Activated CD8-positive, alpha-beta T cell treated with anti-CD3 and anti-CD28 coated beads for 36 hours (primary cell): ENCODE measurements at regions of chr2 and their contacts with region 1.

Region 1: GRCh38 chr2:112884869-112885505 is 26.0 kb upstream of the IL37 start:
- DNase-seq: peak; percentile 81
- ATAC-seq: peak; percentile 79
- H3K4me3 Mint-ChIP-seq: no peak overlapping the region
- H3K27ac Mint-ChIP-seq: no peak overlapping the region
- H3K4me1 Mint-ChIP-seq: peaks cover 23% of the 10 kb centered on the region
- H3K27me3 Mint-ChIP-seq: no peaks in the 10 kb centered on the region
- CTCF ChIP-seq: peak; percentile 95

Region 2: DNA sequence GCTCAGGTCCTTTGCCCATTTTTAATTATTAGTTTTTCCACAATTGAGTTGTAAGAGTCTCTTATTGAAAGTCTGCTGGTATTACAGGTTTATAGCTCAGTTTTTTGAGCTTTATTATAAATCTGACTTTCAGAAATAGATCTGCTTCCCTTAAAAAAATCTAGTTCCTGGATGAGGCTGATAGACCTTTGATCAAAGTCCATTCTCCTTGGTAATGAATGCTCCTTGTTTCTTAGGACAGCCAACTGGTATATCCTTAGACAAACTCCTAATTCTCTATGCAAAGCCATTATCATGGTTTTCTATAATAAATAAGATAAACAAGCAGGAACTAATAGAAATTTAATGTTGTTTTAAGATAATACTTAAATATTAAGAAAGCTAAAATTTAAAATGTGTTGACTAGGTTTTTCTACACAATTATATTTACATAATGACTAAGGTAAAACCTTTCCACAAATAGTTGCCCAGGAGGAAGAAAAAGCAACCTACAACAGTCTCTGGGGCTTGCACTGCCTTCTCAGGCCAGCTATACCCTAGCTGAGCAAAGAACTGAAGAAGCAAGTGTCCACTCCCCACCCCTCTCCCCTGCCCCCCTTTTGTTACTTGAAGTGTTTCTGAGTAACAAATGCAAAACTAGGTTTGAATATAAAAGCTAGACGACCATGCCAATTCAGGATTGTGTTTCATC is 147.3 kb before region 1 on chr2:
- CTCF ChIA-PET with region 1: interaction called, 23 read pairs
- POLR2A ChIA-PET with region 1: no interaction called
- intact Hi-C with region 1: no loop called
- DNase-seq: no peak
- ATAC-seq: no peak
- H3K4me3 Mint-ChIP-seq: no peak overlapping the region
- H3K27ac Mint-ChIP-seq: no peak overlapping the region
- H3K4me1 Mint-ChIP-seq: no peaks in the 10 kb centered on the region
- H3K27me3 Mint-ChIP-seq: no peaks in the 10 kb centered on the region
- CTCF ChIP-seq: no peak

Region 3: DNA sequence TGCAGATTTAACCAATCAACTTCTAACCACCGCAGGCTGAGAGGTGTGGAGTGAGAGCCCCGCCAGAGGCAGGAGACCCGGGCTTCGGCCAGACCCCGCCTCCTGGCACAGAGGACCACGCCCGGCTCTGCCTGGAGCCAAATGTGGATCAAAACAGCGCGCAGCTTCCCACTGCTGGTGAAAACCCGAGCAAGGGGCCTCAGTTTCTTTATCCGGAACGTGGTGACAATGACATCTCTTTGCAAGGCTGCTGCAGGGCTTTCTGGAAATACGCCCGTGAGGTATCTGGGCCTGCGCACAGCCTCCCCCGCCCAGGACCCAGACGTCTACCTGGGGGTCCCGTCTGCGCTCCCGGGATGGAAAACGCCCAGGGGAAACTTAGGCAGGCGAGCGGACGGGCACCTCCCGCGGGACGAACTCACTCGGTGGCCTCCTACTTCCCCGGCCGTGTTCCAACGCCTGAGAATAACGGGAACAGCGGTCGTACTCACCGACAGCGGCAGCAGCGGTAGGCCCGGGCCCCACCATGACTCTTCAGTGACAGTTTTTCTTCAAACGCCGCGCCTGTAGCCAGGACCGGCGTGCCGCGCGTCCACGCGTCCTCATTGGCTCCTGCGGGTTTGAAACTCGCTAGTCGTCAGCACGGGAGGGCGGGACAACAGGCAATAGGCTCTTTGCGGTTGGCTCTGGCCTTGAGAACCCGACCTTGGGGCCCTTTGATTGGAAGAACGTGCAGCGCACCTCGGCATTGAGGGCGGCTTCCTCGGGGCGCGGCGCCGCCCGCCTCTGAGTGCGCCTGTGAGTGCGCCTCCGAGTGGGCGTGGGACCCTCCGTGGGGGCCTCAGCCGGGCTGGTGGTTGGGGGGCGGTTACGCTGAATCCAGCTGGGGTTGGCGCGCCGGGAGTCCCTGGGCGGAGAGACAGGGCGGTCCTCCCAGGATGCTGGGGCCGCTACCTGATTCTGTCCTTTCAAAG is 120.6 kb before region 1 on chr2 and contains the start of gene CKAP2L:
- CTCF ChIA-PET with region 1: interaction called, 15 read pairs
- POLR2A ChIA-PET with region 1: no interaction called
- intact Hi-C with region 1: no loop called
- DNase-seq: peak; percentile 99
- ATAC-seq: peak; percentile 98
- H3K4me3 Mint-ChIP-seq: peak within 1 kb of the TSS; percentile 97
- H3K27ac Mint-ChIP-seq: peak within 1 kb of the TSS; percentile 95
- H3K4me1 Mint-ChIP-seq: peaks cover 19% of the 10 kb centered on the region
- H3K27me3 Mint-ChIP-seq: no peaks in the 10 kb centered on the region
- CTCF ChIP-seq: no peak
- total RNA-seq, gene CKAP2L: 24.5 to 30.5 TPM

Region 4: DNA sequence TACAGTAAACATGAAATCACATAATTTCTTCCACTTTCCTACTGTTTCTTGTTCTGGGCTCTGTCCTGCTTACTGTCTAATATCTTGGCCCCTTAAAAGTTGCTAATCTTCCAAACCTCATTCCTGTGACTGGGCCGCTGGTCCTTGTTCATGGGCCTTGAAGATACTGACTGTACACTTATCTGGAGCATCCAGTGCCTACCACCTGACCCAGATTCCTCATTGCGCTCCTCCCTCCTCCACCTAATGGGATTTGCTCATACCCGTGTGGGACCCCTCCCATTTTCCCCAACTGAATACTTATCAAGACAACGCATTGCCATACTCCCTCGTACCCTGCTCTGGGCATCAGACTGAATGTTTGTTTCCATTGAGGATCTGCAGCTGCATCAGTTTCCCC is 19.9 kb after region 1 on chr2:
- CTCF ChIA-PET with region 1: interaction called, 21 read pairs
- POLR2A ChIA-PET with region 1: no interaction called
- intact Hi-C with region 1: no loop called
- DNase-seq: no peak
- ATAC-seq: no peak
- H3K4me3 Mint-ChIP-seq: no peak overlapping the region
- H3K27ac Mint-ChIP-seq: no peak overlapping the region
- H3K4me1 Mint-ChIP-seq: no peaks in the 10 kb centered on the region
- H3K27me3 Mint-ChIP-seq: no peaks in the 10 kb centered on the region
- CTCF ChIP-seq: no peak

Region 5: DNA sequence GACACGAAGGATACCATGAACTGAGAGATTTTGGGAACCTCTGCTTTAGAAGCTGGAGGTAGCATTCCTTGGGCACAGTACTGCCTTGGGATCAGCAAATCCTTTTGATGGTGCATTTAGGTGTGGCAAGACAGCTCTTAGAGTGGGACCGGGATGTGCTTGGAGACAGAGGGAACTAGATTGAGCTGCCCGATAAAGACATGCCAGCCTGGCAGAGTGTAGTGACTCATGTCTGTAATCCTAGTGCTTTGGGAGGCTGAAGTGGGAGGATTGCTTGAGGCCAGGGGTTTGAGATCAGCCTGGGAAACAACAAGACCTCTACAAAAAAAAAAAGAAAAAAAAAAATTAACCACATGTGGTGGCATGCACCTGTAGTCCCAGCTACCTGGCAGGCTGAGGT is 43.9 kb after region 1 on chr2:
- CTCF ChIA-PET with region 1: interaction called, 10 read pairs
- POLR2A ChIA-PET with region 1: no interaction called
- intact Hi-C with region 1: no loop called
- DNase-seq: no peak
- ATAC-seq: no peak
- H3K4me3 Mint-ChIP-seq: no peak overlapping the region
- H3K27ac Mint-ChIP-seq: no peak overlapping the region
- H3K4me1 Mint-ChIP-seq: no peaks in the 10 kb centered on the region
- H3K27me3 Mint-ChIP-seq: no peaks in the 10 kb centered on the region
- CTCF ChIP-seq: no peak

Region 6: GRCh38 chr2:112947374-112947773 is 62.4 kb after region 1 on chr2:
- CTCF ChIA-PET with region 1: interaction called, 59 read pairs
- POLR2A ChIA-PET with region 1: no interaction called
- intact Hi-C with region 1: no loop called
- DNase-seq: no peak
- ATAC-seq: no peak
- H3K4me3 Mint-ChIP-seq: no peak overlapping the region
- H3K27ac Mint-ChIP-seq: no peak overlapping the region
- H3K4me1 Mint-ChIP-seq: no peaks in the 10 kb centered on the region
- H3K27me3 Mint-ChIP-seq: peaks cover 2% of the 10 kb centered on the region
- CTCF ChIP-seq: no peak